Dorsolateral prefrontal cortex (tissue), 120 donors: ENCODE measurements at regions of chr6 and their contacts with region 1.

Region 1: GRCh38 chr6:4155848-4156466 is 20.6 kb upstream of the ECI2 start:
- DNase-seq: peak in 9 of 10 donors; percentile 58 to 90 (median 75)
- H3K4me3 ChIP-seq: peak overlapping the region in 17 of 59 donors; percentile 6 to 45 (median 23)
- H3K27ac ChIP-seq: peak overlapping the region in 2 of 59 donors; percentile 10 to 31
- H3K27me3 ChIP-seq: no peaks in the 10 kb centered on the region
- CTCF ChIP-seq: peak; percentile 83 to 97 (median 92)

Region 2: DNA sequence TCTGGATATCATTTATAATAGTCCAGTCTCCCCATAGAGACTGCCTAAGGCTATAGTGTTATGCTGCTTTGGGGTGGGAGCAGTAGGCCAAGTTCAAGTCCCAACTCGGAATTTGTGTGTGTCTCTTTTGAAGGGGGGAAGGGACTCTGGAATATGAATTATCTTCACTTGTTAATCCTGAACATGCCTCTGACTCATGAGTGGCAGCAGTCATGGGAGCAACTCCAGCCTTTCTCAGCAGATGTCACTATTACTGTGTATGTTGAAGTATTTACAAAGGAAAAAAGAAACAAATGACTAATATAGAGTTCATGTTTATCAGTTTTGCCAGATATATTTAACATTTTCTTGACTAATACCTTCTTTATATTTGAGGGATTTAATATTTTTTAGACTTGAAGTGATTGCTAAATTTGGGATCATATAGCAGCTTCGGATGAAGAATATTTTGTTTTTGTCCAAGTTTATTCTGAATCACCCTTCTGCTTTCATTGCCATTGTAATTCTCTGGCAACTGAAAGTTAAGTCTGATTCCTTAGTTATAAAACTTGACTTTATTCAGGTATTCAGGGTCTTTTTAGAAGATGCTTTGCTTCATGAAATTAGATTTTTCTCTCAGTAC is 100.4 kb before region 1 on chr6:
- intact Hi-C with region 1: loop called (anchors 2 to 10 kb)
- DNase-seq: peak in 3 of 10 donors; percentile 19 to 53 (median 40)
- H3K4me3 ChIP-seq: no peak overlapping the region
- H3K27ac ChIP-seq: peak overlapping the region in 32 of 59 donors; percentile 4 to 71 (median 28)
- H3K27me3 ChIP-seq: no peaks in the 10 kb centered on the region
- CTCF ChIP-seq: peak; percentile 22 to 80 (median 58)

Region 3: GRCh38 chr6:4253604-4254231 is 97.8 kb after region 1 on chr6:
- intact Hi-C with region 1: no loop called
- DNase-seq: no peak
- H3K4me3 ChIP-seq: no peak overlapping the region
- H3K27ac ChIP-seq: no peak overlapping the region
- H3K27me3 ChIP-seq: no peaks in the 10 kb centered on the region
- CTCF ChIP-seq: peak in 28 of 56 donors; percentile 10 to 41 (median 26)

Region 4: DNA sequence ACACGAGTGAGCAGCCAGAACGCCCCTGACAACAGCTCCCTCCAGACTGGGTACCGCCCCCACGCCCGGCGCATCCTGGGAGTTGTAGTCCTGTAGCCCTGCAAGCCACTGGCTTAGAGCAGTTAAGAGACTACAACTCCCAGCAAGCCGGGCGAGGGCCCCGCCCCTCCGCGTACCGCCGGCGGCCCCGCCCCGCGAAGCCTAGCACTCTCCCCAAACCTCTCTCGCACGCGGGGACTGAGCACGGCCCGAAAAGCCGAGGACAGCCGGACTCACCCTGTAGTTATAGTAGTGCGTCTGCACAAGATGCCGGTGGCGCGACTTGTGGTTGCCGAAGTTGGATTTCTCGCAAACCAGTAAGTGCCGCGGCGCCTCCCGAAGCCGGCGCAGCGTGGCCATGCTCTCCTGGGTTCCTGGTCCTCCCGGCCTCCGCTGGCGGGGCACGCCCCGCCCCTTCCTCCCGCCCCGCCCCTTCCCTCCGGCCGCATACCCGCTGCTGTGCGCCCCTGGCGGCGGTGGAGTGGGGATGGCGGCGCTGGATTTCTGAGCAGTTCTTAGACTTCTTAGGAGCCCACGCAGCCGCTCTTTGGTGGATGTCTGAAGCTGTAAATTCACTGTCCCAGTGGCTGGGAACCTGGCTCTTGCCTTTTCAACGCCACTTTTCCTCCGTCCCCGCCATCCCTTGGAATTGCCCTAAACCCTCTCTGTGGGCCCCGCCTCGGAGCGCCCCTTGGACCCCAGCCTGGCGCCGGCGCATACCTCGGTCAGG is 847.8 kb after region 1 on chr6 and contains the start of gene RPP40:
- intact Hi-C with region 1: loop called in 1 of 2 experiments (anchors 10 kb)
- DNase-seq: peak; percentile 96 to 98 (median 98)
- H3K4me3 ChIP-seq: peak within 1 kb of the TSS; percentile 65 to 92 (median 78)
- H3K27ac ChIP-seq: peak within 1 kb of the TSS in 58 of 59 donors; percentile 51 to 96 (median 87)
- H3K27me3 ChIP-seq: no peaks in the 10 kb centered on the region
- CTCF ChIP-seq: peak; percentile 59 to 93 (median 82)
- total RNA-seq, gene RPP40: 2.3 to 12.3 (median 7.3) TPM